Activated T-helper 1 cell treated with anti-CD3 and anti-CD28 coated beads, Interleukin-12 subunit alpha, Interleukin-12 subunit beta, Interleukin-2, Interleukin-4 antibody, amounts not matched to agents 30 ng/mL and 10 ng/mL and 1 ng/mL, durations not matched to agents 14 hours and 24 hours and 36 hours (primary cell): ENCODE measurements at regions of chr13 and their contacts with region 1.

Region 1: GRCh38 chr13:21149568-21149967 is 26.8 kb downstream of the SKA3 start:
- DNase-seq: no peak
- H3K4me3 Mint-ChIP-seq: no peak overlapping the region
- H3K27ac Mint-ChIP-seq: no peak overlapping the region
- H3K4me1 Mint-ChIP-seq: no peaks in the 10 kb centered on the region
- H3K27me3 Mint-ChIP-seq: no peaks in the 10 kb centered on the region

Region 2: DNA sequence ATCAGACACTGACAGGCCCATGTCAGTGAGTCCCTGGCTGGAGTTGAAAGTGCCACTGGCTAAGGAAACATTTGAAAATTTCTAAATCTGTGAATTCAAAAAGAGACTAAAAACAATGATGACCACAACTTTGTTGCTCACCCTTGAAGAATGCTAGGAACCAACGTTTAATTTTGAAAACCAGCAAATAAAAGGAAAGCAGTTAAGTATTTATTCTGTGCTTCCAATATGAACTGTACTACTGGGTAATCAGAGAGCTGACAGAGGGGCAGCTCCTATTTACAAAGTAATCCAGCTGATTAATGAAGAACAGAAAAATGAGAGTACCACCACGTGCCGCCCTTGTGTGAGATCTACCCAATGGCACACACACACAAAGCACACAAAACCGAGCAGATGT is 43.5 kb before region 1 on chr13:
- intact Hi-C with region 1: no loop called
- DNase-seq: no peak
- H3K4me3 Mint-ChIP-seq: no peak overlapping the region
- H3K27ac Mint-ChIP-seq: no peak overlapping the region
- H3K4me1 Mint-ChIP-seq: no peaks in the 10 kb centered on the region
- H3K27me3 Mint-ChIP-seq: peaks cover 3% of the 10 kb centered on the region

Region 3: GRCh38 chr13:21164631-21165030 is 15.1 kb after region 1 on chr13:
- intact Hi-C with region 1: loop called (anchors 1 kb)
- DNase-seq: no peak
- H3K4me3 Mint-ChIP-seq: no peak overlapping the region
- H3K27ac Mint-ChIP-seq: no peak overlapping the region
- H3K4me1 Mint-ChIP-seq: no peaks in the 10 kb centered on the region
- H3K27me3 Mint-ChIP-seq: no peaks in the 10 kb centered on the region

Region 4: GRCh38 chr13:22262001-22262885 is 1112.7 kb after region 1 on chr13:
- intact Hi-C with region 1: no loop called
- DNase-seq: no peak
- H3K4me3 Mint-ChIP-seq: no peak overlapping the region
- H3K27ac Mint-ChIP-seq: no peak overlapping the region
- H3K4me1 Mint-ChIP-seq: no peaks in the 10 kb centered on the region
- H3K27me3 Mint-ChIP-seq: no peaks in the 10 kb centered on the region